ENCODE measurements at regions of chr6 and their contacts with region 1.

Region 1: DNA sequence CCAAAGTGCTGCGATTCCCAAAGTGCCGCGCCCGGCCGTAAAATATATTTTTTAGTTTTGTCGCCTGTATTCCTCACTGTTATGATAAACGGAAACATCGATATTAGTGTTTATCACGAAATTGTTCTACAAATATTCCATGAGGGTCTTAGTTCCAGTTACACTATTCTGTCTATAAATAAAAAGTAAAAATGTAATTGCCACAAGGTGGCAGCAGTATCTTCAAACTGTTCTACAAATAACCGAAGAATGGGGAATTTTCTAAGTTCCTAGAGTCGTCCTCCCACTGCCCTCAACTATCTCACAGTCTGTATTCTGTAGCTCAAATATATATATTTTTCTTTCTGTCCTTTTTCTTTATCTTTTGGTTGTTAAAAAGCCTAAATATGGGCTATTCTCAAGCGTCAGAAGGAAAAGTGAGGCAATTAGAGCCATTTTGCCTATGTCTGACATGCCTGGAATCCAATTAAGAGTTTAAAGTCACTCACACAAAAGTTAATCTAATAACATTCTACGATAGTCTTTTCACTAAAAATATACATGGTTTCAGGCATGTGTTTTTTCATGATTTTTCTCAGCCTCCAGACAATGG is 14.2 kb upstream of the FAM162B start:
- DNase-seq: peak; percentile 49
- H3K4me3 Mint-ChIP-seq: no peak overlapping the region
- H3K27ac Mint-ChIP-seq: no peak overlapping the region
- H3K4me1 Mint-ChIP-seq: peaks cover 6% of the 10 kb centered on the region
- H3K27me3 Mint-ChIP-seq: no peaks in the 10 kb centered on the region
- CTCF ChIP-seq: peak; percentile 29

Region 2: DNA sequence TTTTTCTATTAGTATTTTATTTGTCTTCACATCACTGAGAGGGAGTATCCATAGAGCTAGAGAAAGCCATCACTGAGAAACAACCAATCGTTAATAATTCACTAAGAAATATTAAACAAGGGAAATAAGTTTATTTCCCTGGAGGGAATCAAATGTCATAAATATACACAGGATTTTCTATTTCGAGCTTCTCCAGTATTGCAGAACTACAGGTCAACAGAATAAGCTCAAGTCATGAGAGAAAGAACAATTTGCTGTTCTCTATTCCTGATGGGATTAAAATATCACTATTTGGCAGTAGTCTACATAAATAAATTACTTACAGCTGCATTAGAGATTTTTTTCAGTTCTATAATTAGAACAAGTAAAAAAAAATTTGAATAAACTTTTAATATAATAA is 12.0 kb before region 1 on chr6:
- CTCF ChIA-PET with region 1: interaction called, 39 read pairs
- POLR2A ChIA-PET with region 1: no interaction called
- intact Hi-C with region 1: no loop called
- DNase-seq: no peak
- H3K4me3 Mint-ChIP-seq: no peak overlapping the region
- H3K27ac Mint-ChIP-seq: no peak overlapping the region
- H3K4me1 Mint-ChIP-seq: no peaks in the 10 kb centered on the region
- H3K27me3 Mint-ChIP-seq: peaks cover 21% of the 10 kb centered on the region
- CTCF ChIP-seq: no peak

Region 3: DNA sequence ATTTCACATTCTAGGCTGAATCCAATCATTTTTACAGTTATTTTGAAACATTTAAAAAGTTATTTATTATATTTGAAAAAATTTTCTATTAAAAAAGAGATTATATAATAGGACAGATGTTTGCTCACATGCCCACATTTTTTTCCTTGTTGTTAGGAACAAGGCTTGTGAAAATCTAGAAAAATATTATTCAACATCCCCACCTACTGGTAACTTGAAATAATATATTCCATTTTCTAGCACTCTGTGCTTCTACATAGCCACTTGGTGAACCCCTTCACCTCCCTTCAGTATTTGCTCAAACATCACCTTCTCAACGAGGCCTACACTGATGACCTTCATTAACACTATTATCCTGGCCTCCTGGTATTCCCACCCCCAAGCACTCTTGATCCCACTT is 67.6 kb after region 1 on chr6:
- CTCF ChIA-PET with region 1: interaction called, 56 read pairs
- POLR2A ChIA-PET with region 1: no interaction called
- intact Hi-C with region 1: loop called (anchors 1 kb)
- DNase-seq: peak; percentile 47
- H3K4me3 Mint-ChIP-seq: no peak overlapping the region
- H3K27ac Mint-ChIP-seq: no peak overlapping the region
- H3K4me1 Mint-ChIP-seq: no peaks in the 10 kb centered on the region
- H3K27me3 Mint-ChIP-seq: peaks cover 63% of the 10 kb centered on the region
- CTCF ChIP-seq: peak; percentile 29

Region 4: GRCh38 chr6:116876635-116877611 is 97.3 kb after region 1 on chr6 and contains the start of gene RFX6:
- CTCF ChIA-PET with region 1: no interaction called
- POLR2A ChIA-PET with region 1: no interaction called
- intact Hi-C with region 1: no loop called
- DNase-seq: no peak
- H3K4me3 Mint-ChIP-seq: no peak within 1 kb of the TSS
- H3K27ac Mint-ChIP-seq: no peak within 1 kb of the TSS
- H3K4me1 Mint-ChIP-seq: no peaks in the 10 kb centered on the region
- H3K27me3 Mint-ChIP-seq: peaks cover 64% of the 10 kb centered on the region
- CTCF ChIP-seq: no peak
- total RNA-seq, gene RFX6: not detected in 2 replicates